ENCODE measurements at regions of chr2 and their contacts with region 1.

Region 1: GRCh38 chr2:201176081-201176481 is 6.9 kb upstream of the CASP10 start:
- DNase-seq: no peak
- H3K4me3 Mint-ChIP-seq: no peak overlapping the region
- H3K27ac Mint-ChIP-seq: no peak overlapping the region
- H3K4me1 Mint-ChIP-seq: peaks cover 5% of the 10 kb centered on the region
- H3K27me3 Mint-ChIP-seq: no peaks in the 10 kb centered on the region

Region 2: DNA sequence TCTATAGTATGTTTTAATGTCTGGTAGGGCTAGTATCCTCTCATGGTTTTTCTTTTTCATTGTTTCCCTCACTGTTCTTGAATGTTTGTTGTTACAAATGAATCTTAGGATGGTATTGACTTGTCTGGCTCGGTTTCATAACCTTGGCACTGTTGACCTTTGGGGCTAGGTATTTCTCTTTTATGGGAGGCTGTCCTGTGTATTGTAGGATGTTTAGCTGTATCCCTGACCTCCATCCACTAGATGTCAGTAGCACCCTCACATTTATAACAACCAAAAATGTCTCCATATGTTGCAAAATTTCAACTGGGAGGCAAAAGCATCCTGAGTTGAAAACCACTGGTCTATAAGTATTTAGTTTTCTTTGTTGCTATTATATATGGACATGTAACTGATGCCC is 597.3 kb before region 1 on chr2:
- CTCF ChIA-PET with region 1: no interaction called
- intact Hi-C with region 1: loop called (anchors 2 kb)
- DNase-seq: peak; percentile 18
- H3K4me3 Mint-ChIP-seq: no peak overlapping the region
- H3K27ac Mint-ChIP-seq: peak overlapping the region; percentile 16
- H3K4me1 Mint-ChIP-seq: peaks cover 14% of the 10 kb centered on the region
- H3K27me3 Mint-ChIP-seq: no peaks in the 10 kb centered on the region

Region 3: GRCh38 chr2:200703127-200703925 is 472.8 kb before region 1 on chr2:
- CTCF ChIA-PET with region 1: no interaction called
- intact Hi-C with region 1: no loop called
- DNase-seq: peak; percentile 68
- H3K4me3 Mint-ChIP-seq: peak overlapping the region; percentile 19
- H3K27ac Mint-ChIP-seq: peak overlapping the region; percentile 83
- H3K4me1 Mint-ChIP-seq: peaks cover 55% of the 10 kb centered on the region
- H3K27me3 Mint-ChIP-seq: peaks cover 1% of the 10 kb centered on the region

Region 4: DNA sequence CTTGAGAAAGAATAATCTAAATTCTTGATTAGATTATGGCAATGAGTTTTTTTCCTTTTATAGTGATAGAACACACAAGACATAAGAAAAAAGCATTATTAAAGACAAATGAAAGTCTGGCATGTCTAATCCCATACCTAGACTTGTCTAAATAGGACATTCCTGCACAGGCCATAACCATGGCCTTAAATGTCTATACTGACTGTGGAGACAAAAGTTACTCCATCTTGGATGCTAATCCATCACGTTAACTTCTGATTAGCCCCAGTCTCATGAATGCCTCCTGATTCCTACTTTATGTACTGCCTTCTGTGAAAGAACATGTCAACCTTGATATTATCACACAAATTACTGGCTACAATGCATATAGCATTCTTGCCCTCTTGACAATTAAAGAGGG is 236.2 kb before region 1 on chr2:
- CTCF ChIA-PET with region 1: no interaction called
- intact Hi-C with region 1: no loop called
- DNase-seq: no peak
- H3K4me3 Mint-ChIP-seq: no peak overlapping the region
- H3K27ac Mint-ChIP-seq: no peak overlapping the region
- H3K4me1 Mint-ChIP-seq: peaks cover 16% of the 10 kb centered on the region
- H3K27me3 Mint-ChIP-seq: no peaks in the 10 kb centered on the region

Region 5: DNA sequence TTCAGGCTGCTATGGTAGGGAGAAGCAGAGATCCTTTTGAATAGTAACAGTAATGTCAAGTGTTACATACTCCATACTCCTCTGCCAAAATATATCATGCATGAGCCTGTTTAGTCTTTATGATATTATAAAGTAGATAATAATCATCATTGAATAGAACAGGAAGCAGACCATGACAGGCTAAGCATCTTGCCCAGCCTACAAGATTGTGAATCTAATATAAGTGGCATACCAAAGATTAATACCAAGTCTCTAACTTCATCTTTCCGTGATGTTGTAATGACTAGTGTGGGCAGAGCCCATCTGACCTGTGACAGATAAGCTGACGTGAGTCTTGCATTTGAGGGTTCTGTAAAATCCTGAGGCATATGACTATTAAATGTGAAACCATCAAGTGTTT is 91.2 kb before region 1 on chr2:
- CTCF ChIA-PET with region 1: no interaction called
- intact Hi-C with region 1: no loop called
- DNase-seq: no peak
- H3K4me3 Mint-ChIP-seq: no peak overlapping the region
- H3K27ac Mint-ChIP-seq: peak overlapping the region; percentile 53
- H3K4me1 Mint-ChIP-seq: peaks cover 8% of the 10 kb centered on the region
- H3K27me3 Mint-ChIP-seq: no peaks in the 10 kb centered on the region

Region 6: DNA sequence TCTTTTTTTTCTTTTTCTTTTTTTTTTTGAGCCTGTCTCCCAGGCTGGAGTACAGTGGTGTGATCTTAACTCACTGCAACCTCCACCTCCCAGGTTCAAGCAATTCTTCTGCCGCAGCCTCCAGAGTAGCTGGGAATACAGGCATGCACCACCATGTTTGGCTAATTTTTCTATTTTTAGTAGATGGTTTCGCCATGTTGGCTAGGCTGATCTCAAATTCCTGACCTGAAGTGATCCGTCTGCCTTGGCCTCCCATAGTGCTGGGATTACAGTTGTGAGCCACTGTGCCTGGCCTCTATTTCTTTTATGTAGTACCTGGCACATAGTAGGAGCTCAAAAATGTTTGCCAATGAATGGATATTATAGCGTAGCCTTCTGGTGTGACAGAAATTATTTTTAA is 66.9 kb before region 1 on chr2:
- CTCF ChIA-PET with region 1: no interaction called
- intact Hi-C with region 1: no loop called
- DNase-seq: no peak
- H3K4me3 Mint-ChIP-seq: no peak overlapping the region
- H3K27ac Mint-ChIP-seq: no peak overlapping the region
- H3K4me1 Mint-ChIP-seq: peaks cover 8% of the 10 kb centered on the region
- H3K27me3 Mint-ChIP-seq: no peaks in the 10 kb centered on the region

Measured in activated naive CD4-positive, alpha-beta T cell treated with anti-CD3 and anti-CD28 coated beads for 36 hours (primary cell).